ENCODE measurements at regions of chr6 and their contacts with region 1.

Region 1: GRCh38 chr6:91198588-91199255 is 611.9 kb upstream of the MAP3K7 start:
- DNase-seq: no peak
- H3K4me3 ChIP-seq: no peak overlapping the region
- H3K27ac ChIP-seq: no peak overlapping the region
- H3K4me1 ChIP-seq: no peaks in the 10 kb centered on the region
- CTCF ChIP-seq: no peak

Region 2: DNA sequence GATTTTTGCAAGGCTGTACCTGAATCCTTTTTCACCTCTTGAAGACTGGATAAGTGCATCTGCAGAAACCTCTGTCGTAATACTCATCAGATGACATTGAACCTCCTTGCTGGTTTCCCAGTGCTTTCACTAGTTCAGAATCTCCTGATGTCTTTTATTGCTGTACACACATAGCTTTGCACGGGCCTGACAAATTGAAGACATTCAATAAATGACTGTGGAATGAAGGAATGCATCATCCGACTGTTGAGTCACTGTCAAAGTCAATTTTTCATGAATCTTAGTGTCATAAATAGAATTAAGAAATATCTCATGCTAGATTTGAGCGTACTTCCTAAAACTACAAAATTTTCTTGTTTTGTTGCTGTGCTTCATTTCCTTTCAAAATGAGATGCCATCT is 13.7 kb before region 1 on chr6:
- CTCF ChIA-PET with region 1: no interaction called
- POLR2A ChIA-PET with region 1: no interaction called
- intact Hi-C with region 1: loop called (anchors 1 kb)
- DNase-seq: no peak
- H3K4me3 ChIP-seq: no peak overlapping the region
- H3K27ac ChIP-seq: no peak overlapping the region
- H3K4me1 ChIP-seq: no peaks in the 10 kb centered on the region
- CTCF ChIP-seq: no peak

Measured in OCI-LY7 (cell line).